Activated CD8-positive, alpha-beta memory T cell treated with anti-CD3 and anti-CD28 coated beads, Interleukin-2, amount 10 ng/mL, durations not matched to agents 7 days and 5 days (primary cell): ENCODE measurements at regions of chr15 and their contacts with region 1.

Region 1: GRCh38 chr15:43886558-43886957 is 59.8 kb downstream of the WDR76 start:
- DNase-seq: no peak
- ATAC-seq: no peak
- H3K4me3 Mint-ChIP-seq: no peak overlapping the region
- H3K27ac Mint-ChIP-seq: peak overlapping the region; percentile 11
- H3K4me1 Mint-ChIP-seq: no peaks in the 10 kb centered on the region
- H3K27me3 Mint-ChIP-seq: no peaks in the 10 kb centered on the region

Region 2: DNA sequence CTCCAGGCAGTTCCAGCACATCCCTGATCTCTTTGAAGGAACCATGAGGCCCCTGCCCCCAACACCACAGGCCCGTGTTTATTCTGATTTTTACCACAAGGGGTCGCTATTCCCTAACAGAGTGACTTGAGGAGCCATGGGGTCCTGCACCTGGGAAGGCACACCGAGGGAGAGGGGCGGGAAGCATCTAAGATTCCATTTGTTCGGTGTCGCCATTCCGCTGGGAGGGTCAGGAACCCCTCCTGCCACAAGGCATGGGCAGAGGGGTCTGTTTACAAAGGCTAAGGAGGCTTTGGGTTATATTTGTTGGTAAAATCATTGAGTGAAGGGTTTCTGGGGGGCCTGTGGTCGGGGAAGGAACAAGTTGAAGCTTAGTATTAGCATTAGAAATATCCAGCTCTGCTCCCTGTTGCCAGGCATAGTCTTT is 17.3 kb after region 1 on chr15:
- CTCF ChIA-PET with region 1: interaction called, 11 read pairs
- DNase-seq: peak; percentile 68
- ATAC-seq: peak; percentile 82
- H3K4me3 Mint-ChIP-seq: no peak overlapping the region
- H3K27ac Mint-ChIP-seq: no peak overlapping the region
- H3K4me1 Mint-ChIP-seq: peaks cover 4% of the 10 kb centered on the region
- H3K27me3 Mint-ChIP-seq: no peaks in the 10 kb centered on the region